H1 (cell line): ENCODE measurements at regions of chr4 and their contacts with region 1.

Region 1: GRCh38 chr4:106898621-106899230 is 137.4 kb downstream of the DKK2 start:
- DNase-seq: peak in 1 of 2 experiments; percentile 50
- H3K4me3 ChIP-seq: no peak overlapping the region
- H3K27ac ChIP-seq: no peak overlapping the region
- H3K4me1 ChIP-seq: no peaks in the 10 kb centered on the region
- H3K27me3 ChIP-seq: no peaks in the 10 kb centered on the region
- CTCF ChIP-seq: peak in 2 of 3 experiments; percentile 63 to 67; a peak in 3 of 4 replicates
- EP300 ChIP-seq: no peak
- POLR2A ChIP-seq: no peak
- RAD21 ChIP-seq: peak; percentile 76 to 81

Region 2: DNA sequence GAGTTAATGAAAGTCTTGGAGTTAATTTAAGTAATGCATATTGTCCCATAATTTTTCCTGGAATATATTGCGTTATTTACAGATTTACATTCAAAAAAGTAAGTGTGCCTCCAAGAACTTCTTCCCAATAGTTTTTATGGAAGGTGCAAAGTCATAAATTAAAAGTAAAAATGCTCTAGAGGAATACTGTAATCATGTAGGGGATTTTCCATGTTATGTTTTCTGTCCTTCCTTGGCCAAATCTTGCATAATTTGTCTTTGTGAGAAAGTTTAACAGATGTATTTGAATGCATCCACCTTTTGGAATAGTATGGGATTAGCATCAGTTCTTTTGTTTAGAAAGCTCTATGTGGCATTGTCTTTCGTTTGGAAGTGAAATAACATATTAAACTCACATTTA is 386.0 kb before region 1 on chr4:
- CTCF ChIA-PET with region 1: no interaction called
- POLR2A ChIA-PET with region 1: no interaction called
- DNase-seq: no peak
- H3K4me3 ChIP-seq: no peak overlapping the region
- H3K27ac ChIP-seq: no peak overlapping the region
- H3K4me1 ChIP-seq: peaks cover 0 to 2% (median 0%) of the 10 kb centered on the region in 4 experiments; a peak in 1 of 7 replicates
- H3K27me3 ChIP-seq: peaks cover 0 to 1% (median 0%) of the 10 kb centered on the region in 4 experiments; a peak in 1 of 7 replicates
- CTCF ChIP-seq: no peak
- EP300 ChIP-seq: no peak
- POLR2A ChIP-seq: no peak
- RAD21 ChIP-seq: no peak

Region 3: GRCh38 chr4:106818764-106819163 is 80.0 kb before region 1 on chr4:
- CTCF ChIA-PET with region 1: no interaction called
- POLR2A ChIA-PET with region 1: no interaction called
- DNase-seq: no peak
- H3K4me3 ChIP-seq: no peak overlapping the region
- H3K27ac ChIP-seq: no peak overlapping the region
- H3K4me1 ChIP-seq: no peaks in the 10 kb centered on the region
- H3K27me3 ChIP-seq: no peaks in the 10 kb centered on the region
- CTCF ChIP-seq: no peak
- EP300 ChIP-seq: no peak
- POLR2A ChIP-seq: no peak
- RAD21 ChIP-seq: no peak

Region 4: DNA sequence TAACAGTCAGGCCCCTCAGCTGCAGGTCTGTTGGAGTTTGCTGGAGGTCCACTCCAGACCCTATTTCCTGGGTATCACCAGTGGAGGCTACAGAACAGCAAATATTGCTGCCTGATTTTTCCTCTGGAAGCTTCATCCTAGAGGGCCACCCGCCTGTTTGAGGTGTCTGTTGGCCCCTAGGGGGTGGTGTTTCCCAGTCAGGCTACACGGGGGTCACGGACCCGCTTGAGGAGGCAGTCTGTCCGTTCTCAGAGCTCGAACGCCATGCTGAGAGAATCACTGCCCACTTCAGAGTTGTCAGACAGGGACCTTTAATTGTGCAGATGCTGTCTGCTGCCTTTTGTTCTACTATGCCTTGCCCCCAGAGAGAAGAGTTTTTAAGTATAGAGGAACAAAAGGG is 23.4 kb before region 1 on chr4:
- CTCF ChIA-PET with region 1: interaction called, 14 read pairs
- POLR2A ChIA-PET with region 1: no interaction called
- DNase-seq: peak in 1 of 2 experiments; percentile 63
- H3K4me3 ChIP-seq: no peak overlapping the region
- H3K27ac ChIP-seq: no peak overlapping the region
- H3K4me1 ChIP-seq: no peaks in the 10 kb centered on the region
- H3K27me3 ChIP-seq: no peaks in the 10 kb centered on the region
- CTCF ChIP-seq: peak; percentile 45 to 49 (median 46)
- EP300 ChIP-seq: no peak
- POLR2A ChIP-seq: no peak
- RAD21 ChIP-seq: peak; percentile 39 to 55

Region 5: DNA sequence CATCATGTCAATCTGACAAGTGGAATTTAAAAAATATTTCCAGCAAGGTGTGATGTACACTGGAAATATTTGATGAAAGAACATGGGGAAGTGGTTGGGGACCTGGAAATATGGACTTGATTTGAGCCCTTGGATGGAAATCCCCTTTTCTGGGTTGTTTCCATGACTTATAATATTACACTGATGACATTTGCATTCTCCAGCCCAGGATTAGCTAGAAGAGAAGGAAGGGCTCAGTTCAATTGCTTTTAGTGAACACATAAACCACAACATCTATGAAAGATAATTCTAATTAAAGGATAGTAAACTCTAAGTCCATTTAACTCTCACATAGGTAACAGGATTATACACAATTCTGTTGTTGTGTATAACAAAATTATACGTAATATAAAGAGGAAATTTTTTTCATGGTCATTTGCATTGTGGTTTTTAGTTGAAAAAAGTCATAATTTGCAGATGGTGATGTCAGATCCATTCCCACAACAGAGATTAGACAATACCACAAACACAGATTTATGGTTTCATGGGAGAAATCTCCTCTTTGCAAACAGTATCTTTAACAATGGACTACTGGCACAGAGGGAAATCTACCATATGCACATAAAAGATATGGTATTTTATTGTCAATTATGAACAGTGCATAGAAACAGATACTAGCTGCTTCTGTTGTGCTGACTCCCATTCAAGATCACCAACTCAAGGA is 10.9 kb after region 1 on chr4:
- CTCF ChIA-PET with region 1: interaction called, 19 read pairs
- POLR2A ChIA-PET with region 1: no interaction called
- DNase-seq: no peak
- H3K4me3 ChIP-seq: no peak overlapping the region
- H3K27ac ChIP-seq: no peak overlapping the region
- H3K4me1 ChIP-seq: no peaks in the 10 kb centered on the region
- H3K27me3 ChIP-seq: no peaks in the 10 kb centered on the region
- CTCF ChIP-seq: no peak
- EP300 ChIP-seq: no peak
- POLR2A ChIP-seq: no peak
- RAD21 ChIP-seq: no peak